ENCODE measurements at regions of chr9 and their contacts with region 1.

Region 1: GRCh38 chr9:111483862-111484571 is at the start of gene ECPAS:
- DNase-seq: peak; percentile 80 to 90 (median 89)
- ATAC-seq: peak; percentile 86 to 90
- H3K4me3 ChIP-seq: peak within 1 kb of the TSS; percentile 85
- H3K27ac ChIP-seq: peak within 1 kb of the TSS; percentile 96
- H3K4me1 ChIP-seq: no peaks in the 10 kb centered on the region
- H3K27me3 ChIP-seq: no peaks in the 10 kb centered on the region
- total RNA-seq, gene ECPAS: 85.4 to 99.1 (median 90.5) TPM

Region 2: GRCh38 chr9:111627260-111627963 is 143.4 kb after region 1 on chr9:
- intact Hi-C with region 1: loop called in 1 of 4 experiments (anchors 5 kb)
- DNase-seq: no peak
- ATAC-seq: no peak
- H3K4me3 ChIP-seq: no peak overlapping the region
- H3K27ac ChIP-seq: no peak overlapping the region
- H3K4me1 ChIP-seq: no peaks in the 10 kb centered on the region
- H3K27me3 ChIP-seq: no peaks in the 10 kb centered on the region